Dorsolateral prefrontal cortex (tissue), 120 donors: ENCODE measurements at regions of chr16 and their contacts with region 1.

Region 1: GRCh38 chr16:68396481-68396880 is 51.8 kb downstream of the SMPD3 start:
- DNase-seq: no peak
- H3K4me3 ChIP-seq: no peak overlapping the region
- H3K27ac ChIP-seq: no peak overlapping the region
- H3K27me3 ChIP-seq: no peaks in the 10 kb centered on the region
- CTCF ChIP-seq: peak in 53 of 56 donors; percentile 20 to 70 (median 51)

Region 2: GRCh38 chr16:68319185-68319908 is 77.1 kb before region 1 on chr16:
- intact Hi-C with region 1: no loop called
- DNase-seq: no peak
- H3K4me3 ChIP-seq: no peak overlapping the region
- H3K27ac ChIP-seq: no peak overlapping the region
- H3K27me3 ChIP-seq: no peaks in the 10 kb centered on the region
- CTCF ChIP-seq: no peak

Region 3: DNA sequence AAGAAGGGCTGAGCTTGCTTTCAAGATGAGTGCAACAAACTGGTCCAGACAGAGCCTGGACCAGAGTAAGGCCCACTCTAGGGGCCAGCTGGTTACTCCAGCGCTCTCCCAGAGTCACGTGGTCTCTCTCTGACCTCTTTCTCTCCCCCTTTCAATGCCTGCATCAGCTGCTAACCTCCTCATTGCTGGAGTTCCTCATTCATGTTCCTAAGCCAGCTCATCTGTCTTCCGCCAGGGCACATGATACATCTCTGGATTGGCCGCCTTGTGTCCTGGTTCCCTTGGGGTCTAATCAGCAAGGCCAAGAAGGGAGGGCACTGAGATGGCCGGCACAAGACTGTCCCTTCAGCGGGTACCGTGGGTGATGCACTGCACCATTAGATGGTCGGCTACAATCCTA is 115.7 kb after region 1 on chr16:
- intact Hi-C with region 1: loop called in 1 of 2 experiments (anchors 5 kb)
- DNase-seq: no peak
- H3K4me3 ChIP-seq: no peak overlapping the region
- H3K27ac ChIP-seq: no peak overlapping the region
- H3K27me3 ChIP-seq: no peaks in the 10 kb centered on the region
- CTCF ChIP-seq: no peak